ENCODE measurements at regions of chr17 and their contacts with region 1.

Region 1: GRCh38 chr17:78112518-78113226 is 15.9 kb downstream of the TMC6 start:
- DNase-seq: peak; percentile 85
- ATAC-seq: peak; percentile 65
- H3K4me3 Mint-ChIP-seq: no peak overlapping the region
- H3K27ac Mint-ChIP-seq: peak overlapping the region; percentile 80
- H3K4me1 Mint-ChIP-seq: peaks cover 44% of the 10 kb centered on the region
- H3K27me3 Mint-ChIP-seq: no peaks in the 10 kb centered on the region
- CTCF ChIP-seq: peak; percentile 99

Region 2: DNA sequence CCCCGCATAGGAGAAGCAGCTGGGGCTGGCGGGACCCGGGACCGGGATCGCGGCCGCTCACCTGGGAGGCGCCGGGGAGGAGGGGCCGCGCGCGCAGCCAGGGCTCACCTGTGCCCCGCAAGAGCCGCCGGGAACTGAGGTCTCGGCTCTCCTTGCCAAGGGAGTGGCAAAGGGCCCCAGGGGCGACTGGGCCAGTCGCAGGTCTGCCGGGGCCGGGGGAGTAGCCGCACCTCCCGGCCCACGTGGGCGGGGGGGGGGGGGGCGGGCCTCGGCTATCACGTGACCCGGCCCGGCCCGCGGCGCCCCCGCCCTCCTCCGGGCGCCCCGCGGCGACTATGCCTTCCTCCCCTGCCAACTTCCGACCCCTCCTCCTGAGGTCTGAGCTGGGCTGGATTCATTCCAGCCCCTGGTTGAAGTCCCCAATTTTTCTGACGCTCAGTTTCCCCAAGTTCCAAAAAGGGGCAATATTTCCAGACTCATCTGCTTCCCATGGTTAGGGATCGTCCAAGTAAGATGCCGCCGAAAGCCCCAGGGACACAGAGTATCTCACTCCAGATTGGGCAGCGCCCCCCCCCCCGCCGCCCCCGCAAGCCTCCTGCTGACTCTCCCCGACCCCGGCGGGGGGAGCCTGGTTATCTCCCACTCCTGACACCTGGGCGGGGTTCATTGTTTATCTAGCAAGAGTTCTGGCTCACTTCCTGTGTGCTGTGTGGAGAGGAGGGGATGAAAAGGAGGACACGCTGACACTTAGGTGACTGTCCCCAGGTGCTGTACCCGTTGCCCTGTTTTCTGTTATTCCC is 16.1 kb after region 1 on chr17 and contains the start of gene TMC6:
- CTCF ChIA-PET with region 1: interaction called, 74 read pairs
- POLR2A ChIA-PET with region 1: interaction called, 335 read pairs
- intact Hi-C with region 1: no loop called
- DNase-seq: peak; percentile 90
- ATAC-seq: peak; percentile 22
- H3K4me3 Mint-ChIP-seq: peak within 1 kb of the TSS; percentile 78
- H3K27ac Mint-ChIP-seq: peak within 1 kb of the TSS; percentile 97
- H3K4me1 Mint-ChIP-seq: peaks cover 38% of the 10 kb centered on the region
- H3K27me3 Mint-ChIP-seq: no peaks in the 10 kb centered on the region
- CTCF ChIP-seq: no peak
- total RNA-seq, gene TMC6: 209 to 213 TPM

Region 3: GRCh38 chr17:78133971-78134898 is 21.6 kb after region 1 on chr17:
- CTCF ChIA-PET with region 1: interaction called, 74 read pairs
- POLR2A ChIA-PET with region 1: interaction called, 335 read pairs
- intact Hi-C with region 1: no loop called
- DNase-seq: peak; percentile 88
- ATAC-seq: peak; percentile 8
- H3K4me3 Mint-ChIP-seq: peak overlapping the region; percentile 78
- H3K27ac Mint-ChIP-seq: peak overlapping the region; percentile 69
- H3K4me1 Mint-ChIP-seq: peaks cover 69% of the 10 kb centered on the region
- H3K27me3 Mint-ChIP-seq: no peaks in the 10 kb centered on the region
- CTCF ChIP-seq: peak; percentile 74

Region 4: DNA sequence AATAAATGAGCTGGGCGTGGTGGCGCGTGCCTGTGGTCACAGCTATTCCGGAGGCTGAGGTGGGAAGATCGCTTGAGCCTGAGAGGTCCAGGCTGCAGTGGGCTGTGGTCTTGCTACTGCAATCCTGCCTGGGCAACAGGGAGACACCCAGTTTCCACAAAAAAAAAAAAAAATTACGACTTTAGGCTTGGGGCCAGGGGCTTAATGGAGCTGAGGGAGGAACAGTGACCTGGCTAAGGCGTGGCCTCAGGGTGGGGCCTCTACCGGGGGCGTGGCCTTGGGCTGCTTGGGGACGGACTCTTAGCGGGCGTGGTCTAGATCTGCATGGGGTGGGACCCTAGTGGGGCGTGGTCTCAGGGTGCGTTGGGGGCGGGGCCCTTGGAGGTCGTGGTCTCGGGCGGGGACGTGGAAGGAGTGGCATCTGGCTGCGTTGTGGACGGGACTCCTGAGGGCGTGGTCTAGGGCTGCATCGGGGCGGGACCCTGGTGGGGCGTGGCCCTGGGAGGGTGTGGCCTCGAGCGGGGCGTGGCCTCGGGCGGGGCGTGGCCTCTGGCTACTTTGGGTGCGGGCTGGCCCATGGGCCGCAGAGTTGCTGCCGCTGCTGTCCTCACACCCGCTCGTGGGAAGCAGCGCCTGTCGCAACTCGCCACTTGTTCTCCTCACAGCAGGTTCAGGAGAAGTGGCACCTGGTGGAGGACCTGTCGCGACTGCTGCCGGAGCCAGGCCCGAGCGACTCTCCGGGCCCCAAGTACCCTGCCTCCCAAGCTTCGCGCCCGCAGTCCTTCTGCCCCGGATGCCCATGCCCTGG is 27.7 kb after region 1 on chr17:
- CTCF ChIA-PET with region 1: interaction called, 74 read pairs
- POLR2A ChIA-PET with region 1: interaction called, 335 read pairs
- intact Hi-C with region 1: no loop called
- DNase-seq: peak; percentile 100
- ATAC-seq: peak; percentile 91
- H3K4me3 Mint-ChIP-seq: peak overlapping the region; percentile 28
- H3K27ac Mint-ChIP-seq: peak overlapping the region; percentile 85
- H3K4me1 Mint-ChIP-seq: peaks cover 67% of the 10 kb centered on the region
- H3K27me3 Mint-ChIP-seq: no peaks in the 10 kb centered on the region
- CTCF ChIP-seq: no peak